ENCODE measurements at regions of chr13 and their contacts with region 1.

Region 1: GRCh38 chr13:95301183-95301967 is at the start of gene ABCC4:
- DNase-seq: peak; percentile 53
- H3K4me3 Mint-ChIP-seq: peak within 1 kb of the TSS; percentile 80
- H3K27ac Mint-ChIP-seq: peak within 1 kb of the TSS; percentile 51
- H3K4me1 Mint-ChIP-seq: peaks cover 39% of the 10 kb centered on the region
- H3K27me3 Mint-ChIP-seq: peaks cover 7% of the 10 kb centered on the region
- total RNA-seq, gene ABCC4: 8.0 to 8.1 TPM

Region 2: DNA sequence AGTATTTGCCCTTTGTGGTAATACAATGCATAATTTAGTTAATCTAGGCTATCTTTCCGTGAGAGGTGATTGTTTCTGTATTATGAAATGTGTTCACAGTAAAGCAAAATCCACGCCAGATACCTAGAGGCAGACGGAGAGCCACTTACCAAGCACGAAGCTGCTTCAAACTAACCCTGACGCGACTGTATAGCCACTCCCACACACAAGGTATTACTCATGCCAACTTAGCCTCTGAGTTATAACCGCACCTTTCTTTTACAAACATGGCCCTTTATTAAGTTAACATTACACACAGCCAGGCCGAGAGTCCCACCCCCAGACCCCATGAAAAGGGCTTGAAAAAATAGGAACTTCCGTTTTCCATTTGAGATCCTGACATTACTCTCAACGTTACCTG is 185.8 kb before region 1 on chr13:
- CTCF ChIA-PET with region 1: no interaction called
- intact Hi-C with region 1: no loop called
- DNase-seq: no peak
- H3K4me3 Mint-ChIP-seq: no peak overlapping the region
- H3K27ac Mint-ChIP-seq: no peak overlapping the region
- H3K4me1 Mint-ChIP-seq: peaks cover 5% of the 10 kb centered on the region
- H3K27me3 Mint-ChIP-seq: no peaks in the 10 kb centered on the region

Region 3: GRCh38 chr13:95191821-95192563 is 109.4 kb before region 1 on chr13:
- CTCF ChIA-PET with region 1: interaction called, 15 read pairs
- intact Hi-C with region 1: loop called (anchors 1 kb)
- DNase-seq: peak; percentile 82
- H3K4me3 Mint-ChIP-seq: no peak overlapping the region
- H3K27ac Mint-ChIP-seq: no peak overlapping the region
- H3K4me1 Mint-ChIP-seq: peaks cover 5% of the 10 kb centered on the region
- H3K27me3 Mint-ChIP-seq: no peaks in the 10 kb centered on the region

Region 4: DNA sequence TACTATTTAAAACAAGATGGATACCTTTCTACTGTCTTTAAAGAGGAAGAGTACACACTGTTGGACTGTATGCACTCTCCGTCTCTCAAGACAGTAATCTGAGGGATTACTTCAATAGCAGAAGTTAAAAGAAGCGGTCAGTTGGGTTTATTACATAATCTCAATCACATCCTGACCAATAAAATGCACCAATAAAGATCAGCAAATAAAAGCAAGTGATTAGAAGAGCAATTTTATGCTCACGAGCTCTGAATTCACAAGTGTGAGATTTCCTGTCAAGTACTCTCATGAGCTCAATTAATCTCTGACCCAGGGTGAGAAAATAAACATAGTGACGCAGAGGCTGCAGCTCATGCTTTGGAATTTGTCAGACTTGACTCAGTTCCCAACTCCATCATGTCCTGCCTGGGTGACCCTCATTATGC is 12.3 kb before region 1 on chr13:
- CTCF ChIA-PET with region 1: interaction called, 10 read pairs
- intact Hi-C with region 1: no loop called
- DNase-seq: no peak
- H3K4me3 Mint-ChIP-seq: no peak overlapping the region
- H3K27ac Mint-ChIP-seq: no peak overlapping the region
- H3K4me1 Mint-ChIP-seq: no peaks in the 10 kb centered on the region
- H3K27me3 Mint-ChIP-seq: no peaks in the 10 kb centered on the region

Region 5: GRCh38 chr13:95317039-95317989 is 15.9 kb after region 1 on chr13:
- CTCF ChIA-PET with region 1: no interaction called
- intact Hi-C with region 1: no loop called
- DNase-seq: no peak
- H3K4me3 Mint-ChIP-seq: no peak overlapping the region
- H3K27ac Mint-ChIP-seq: no peak overlapping the region
- H3K4me1 Mint-ChIP-seq: no peaks in the 10 kb centered on the region
- H3K27me3 Mint-ChIP-seq: no peaks in the 10 kb centered on the region

Region 6: DNA sequence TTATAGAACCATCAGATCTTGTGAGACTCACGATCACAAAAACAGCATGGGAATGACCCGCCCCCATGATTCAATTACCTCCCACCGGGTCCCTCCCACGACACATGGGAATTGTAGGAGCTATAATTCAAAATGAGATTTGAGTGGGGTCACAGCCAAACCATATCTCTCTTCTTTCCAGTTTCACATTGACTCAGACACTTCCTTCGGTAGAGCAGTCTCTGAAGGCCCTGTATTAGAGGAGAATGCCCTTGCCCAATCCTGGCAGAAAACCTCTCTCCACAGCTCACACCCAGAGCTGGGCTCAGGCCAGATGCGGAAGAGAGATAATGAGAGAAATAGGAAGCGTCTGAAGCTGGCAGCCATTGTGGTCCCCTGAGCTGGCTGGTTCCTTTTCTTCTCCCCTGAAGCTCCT is 178.8 kb after region 1 on chr13:
- CTCF ChIA-PET with region 1: no interaction called
- intact Hi-C with region 1: loop called (anchors 1 kb)
- DNase-seq: peak; percentile 27
- H3K4me3 Mint-ChIP-seq: no peak overlapping the region
- H3K27ac Mint-ChIP-seq: no peak overlapping the region
- H3K4me1 Mint-ChIP-seq: peaks cover 10% of the 10 kb centered on the region
- H3K27me3 Mint-ChIP-seq: peaks cover 3% of the 10 kb centered on the region

Measured in activated naive CD4-positive, alpha-beta T cell treated with anti-CD3 and anti-CD28 coated beads for 36 hours (primary cell).